ENCODE measurements at regions of chr6 and their contacts with region 1.

Region 1: GRCh38 chr6:39203852-39204375 is 25.4 kb downstream of the KCNK5 start:
- DNase-seq: peak; percentile 84
- H3K4me3 Mint-ChIP-seq: no peak overlapping the region
- H3K27ac Mint-ChIP-seq: peak overlapping the region; percentile 59
- H3K4me1 Mint-ChIP-seq: peaks cover 20% of the 10 kb centered on the region
- H3K27me3 Mint-ChIP-seq: no peaks in the 10 kb centered on the region
- CTCF ChIP-seq: no peak

Region 2: GRCh38 chr6:39189915-39190544 is 13.9 kb before region 1 on chr6:
- CTCF ChIA-PET with region 1: interaction called, 32 read pairs
- POLR2A ChIA-PET with region 1: interaction called, 31 read pairs
- intact Hi-C with region 1: no loop called
- DNase-seq: peak; percentile 54
- H3K4me3 Mint-ChIP-seq: no peak overlapping the region
- H3K27ac Mint-ChIP-seq: peak overlapping the region; percentile 40
- H3K4me1 Mint-ChIP-seq: peaks cover 17% of the 10 kb centered on the region
- H3K27me3 Mint-ChIP-seq: no peaks in the 10 kb centered on the region
- CTCF ChIP-seq: peak; percentile 38

Region 3: GRCh38 chr6:39228992-39229767 is 25.3 kb after region 1 on chr6 and contains the start of gene KCNK5:
- CTCF ChIA-PET with region 1: interaction called, 3 read pairs
- POLR2A ChIA-PET with region 1: interaction called, 13 read pairs
- intact Hi-C with region 1: no loop called
- DNase-seq: peak; percentile 89
- H3K4me3 Mint-ChIP-seq: peak within 1 kb of the TSS; percentile 75
- H3K27ac Mint-ChIP-seq: no peak within 1 kb of the TSS
- H3K4me1 Mint-ChIP-seq: peaks cover 23% of the 10 kb centered on the region
- H3K27me3 Mint-ChIP-seq: no peaks in the 10 kb centered on the region
- CTCF ChIP-seq: peak; percentile 51
- total RNA-seq, gene KCNK5: 1.3 and 2.6 TPM in 2 replicates

Region 4: GRCh38 chr6:39882531-39882899 is 678.6 kb after region 1 on chr6:
- CTCF ChIA-PET with region 1: no interaction called
- POLR2A ChIA-PET with region 1: no interaction called
- intact Hi-C with region 1: no loop called
- DNase-seq: peak; percentile 8
- H3K4me3 Mint-ChIP-seq: no peak overlapping the region
- H3K27ac Mint-ChIP-seq: no peak overlapping the region
- H3K4me1 Mint-ChIP-seq: peaks cover 4% of the 10 kb centered on the region
- H3K27me3 Mint-ChIP-seq: no peaks in the 10 kb centered on the region
- CTCF ChIP-seq: no peak

Region 5: DNA sequence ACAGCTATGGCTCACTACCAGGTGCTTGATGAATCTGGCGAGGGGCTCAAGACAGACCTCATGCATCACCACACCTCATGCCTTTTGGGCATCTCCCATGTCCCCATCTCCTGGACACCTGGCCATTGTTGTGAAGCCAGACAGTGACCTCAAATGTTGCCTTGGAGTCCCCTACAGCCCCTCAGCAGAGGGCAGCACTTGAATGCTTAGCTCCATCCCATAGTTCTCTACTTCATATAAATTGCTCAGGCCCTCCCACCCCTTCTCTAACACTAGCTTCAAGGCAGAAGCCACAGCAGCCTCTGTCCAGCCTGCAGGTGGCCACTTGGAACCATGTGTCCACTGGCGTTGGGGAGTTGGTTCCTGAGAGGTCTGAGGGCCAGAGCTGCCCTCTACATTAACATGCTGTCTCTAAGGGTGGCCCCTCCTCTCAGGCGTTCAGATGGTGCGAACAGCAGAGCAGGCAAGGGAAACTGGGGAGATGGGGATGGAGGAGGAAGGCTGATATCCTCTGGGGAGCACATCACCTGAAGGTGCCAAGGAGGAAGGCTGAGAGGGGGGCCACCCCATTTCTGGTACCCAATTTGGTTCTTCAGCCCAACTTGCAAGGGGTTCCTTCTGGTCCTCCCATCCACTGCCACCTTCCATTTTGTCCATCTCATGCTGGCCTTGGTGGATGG is 699.0 kb after region 1 on chr6:
- CTCF ChIA-PET with region 1: no interaction called
- POLR2A ChIA-PET with region 1: no interaction called
- intact Hi-C with region 1: loop called (anchors 10 kb)
- DNase-seq: no peak
- H3K4me3 Mint-ChIP-seq: no peak overlapping the region
- H3K27ac Mint-ChIP-seq: no peak overlapping the region
- H3K4me1 Mint-ChIP-seq: no peaks in the 10 kb centered on the region
- H3K27me3 Mint-ChIP-seq: no peaks in the 10 kb centered on the region
- CTCF ChIP-seq: no peak